Dorsolateral prefrontal cortex (tissue), 120 donors: ENCODE measurements at regions of chr7 and their contacts with region 1.

Region 1: DNA sequence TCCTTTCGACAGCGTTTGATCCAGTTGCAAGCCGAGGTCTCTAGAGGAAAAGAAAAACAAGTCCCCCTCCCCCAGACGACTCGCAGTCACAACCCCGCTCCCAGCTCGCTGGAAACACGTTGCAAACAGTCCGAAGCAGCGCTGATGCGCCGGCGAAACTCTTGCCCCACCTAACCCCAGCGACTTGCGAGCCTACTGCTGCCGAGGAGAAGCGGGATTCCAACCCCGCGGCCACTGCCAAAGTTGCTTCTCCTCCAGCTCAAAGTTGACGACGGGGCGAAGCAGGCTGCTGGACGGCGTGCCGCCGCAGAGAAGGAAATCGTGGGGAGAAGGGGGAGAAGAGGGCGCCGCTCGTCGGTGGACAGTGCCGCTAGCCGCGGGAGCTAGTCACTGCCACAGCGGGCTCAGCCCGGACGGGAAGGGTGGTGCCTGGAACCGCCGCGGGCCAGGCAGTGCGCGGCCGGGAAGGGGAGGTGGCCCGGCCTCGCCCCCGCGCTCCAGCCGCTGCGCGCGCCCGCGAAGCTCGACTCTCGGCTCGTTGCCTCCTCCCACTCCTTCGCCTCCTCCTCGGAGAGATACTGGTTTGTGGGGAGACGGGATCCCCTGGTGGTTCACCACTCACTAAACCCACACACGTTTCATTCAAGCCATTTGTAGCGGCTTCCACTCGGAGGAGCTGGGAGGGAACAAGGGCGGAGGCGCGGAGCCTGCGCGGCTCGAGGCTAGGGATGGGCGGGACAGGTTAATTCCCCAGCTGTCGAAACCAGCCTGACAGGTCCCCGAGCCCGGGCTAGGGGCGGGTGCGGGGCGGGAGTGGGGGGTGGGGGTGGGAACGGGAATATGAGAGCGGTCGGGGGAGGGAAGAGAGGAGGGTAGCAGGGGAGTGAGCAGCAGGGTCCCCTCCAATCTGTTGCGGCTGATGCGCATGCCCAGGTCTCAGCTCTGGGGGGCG is at the start of gene GPR37:
- DNase-seq: peak; percentile 34 to 91 (median 88)
- H3K4me3 ChIP-seq: peak within 1 kb of the TSS; percentile 51 to 92 (median 75)
- H3K27ac ChIP-seq: peak within 1 kb of the TSS; percentile 69 to 99 (median 95)
- H3K27me3 ChIP-seq: peaks cover 0 to 13% (median 0%) of the 10 kb centered on the region in 45 donors
- CTCF ChIP-seq: peak in 51 of 56 donors; percentile 10 to 72 (median 51)
- total RNA-seq, gene GPR37: 19.1 to 393 (median 88.3) TPM

Region 2: DNA sequence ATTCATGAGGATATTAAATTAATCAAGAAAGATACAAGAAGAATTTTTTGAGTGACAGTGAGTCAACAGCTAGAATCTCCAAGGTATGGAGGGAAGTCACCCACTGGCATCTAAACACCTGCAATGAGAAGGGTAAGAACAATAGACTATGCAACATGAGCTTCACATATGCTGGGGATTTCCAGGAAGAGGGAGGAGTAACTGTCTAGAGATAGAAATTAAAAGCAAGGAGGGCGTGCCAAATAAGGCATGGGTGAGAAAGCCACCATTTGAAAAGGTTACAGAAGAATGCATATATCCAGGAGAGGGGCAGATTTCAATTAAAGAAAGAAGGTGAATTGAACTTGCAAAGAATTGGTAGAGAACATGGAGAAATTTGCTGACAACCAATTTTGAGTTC is 365.7 kb before region 1 on chr7:
- intact Hi-C with region 1: loop called in 1 of 2 experiments (anchors 10 kb)
- DNase-seq: no peak
- H3K4me3 ChIP-seq: no peak overlapping the region
- H3K27ac ChIP-seq: no peak overlapping the region
- H3K27me3 ChIP-seq: no peaks in the 10 kb centered on the region
- CTCF ChIP-seq: no peak

Region 3: GRCh38 chr7:124550036-124550435 is 215.6 kb before region 1 on chr7:
- intact Hi-C with region 1: loop called in 1 of 2 experiments (anchors 5 kb)
- DNase-seq: no peak
- H3K4me3 ChIP-seq: peak overlapping the region in 9 of 59 donors; percentile 1 to 24 (median 16)
- H3K27ac ChIP-seq: peak overlapping the region in 5 of 59 donors; percentile 6 to 45 (median 7)
- H3K27me3 ChIP-seq: no peaks in the 10 kb centered on the region
- CTCF ChIP-seq: no peak

Region 4: DNA sequence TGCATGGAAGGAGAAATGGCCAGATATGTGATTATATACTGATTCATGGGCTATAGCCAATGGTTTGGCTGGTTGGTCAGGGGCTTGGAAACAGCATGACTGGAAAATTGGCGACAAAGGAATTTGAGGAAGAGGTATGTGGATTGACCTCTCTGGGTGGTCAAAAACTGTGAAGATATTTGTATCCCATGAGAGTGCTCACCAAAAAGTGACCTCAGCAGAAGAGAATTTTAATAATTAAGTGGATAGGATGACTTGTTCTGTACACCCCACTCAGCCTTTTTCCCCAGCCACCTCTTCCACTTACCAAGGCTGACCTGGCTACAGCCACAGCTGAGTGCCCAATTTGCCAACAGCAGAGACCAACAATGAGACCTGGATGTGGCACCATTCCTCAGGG is 146.8 kb before region 1 on chr7:
- intact Hi-C with region 1: no loop called
- DNase-seq: no peak
- H3K4me3 ChIP-seq: no peak overlapping the region
- H3K27ac ChIP-seq: no peak overlapping the region
- H3K27me3 ChIP-seq: no peaks in the 10 kb centered on the region
- CTCF ChIP-seq: no peak

Region 5: DNA sequence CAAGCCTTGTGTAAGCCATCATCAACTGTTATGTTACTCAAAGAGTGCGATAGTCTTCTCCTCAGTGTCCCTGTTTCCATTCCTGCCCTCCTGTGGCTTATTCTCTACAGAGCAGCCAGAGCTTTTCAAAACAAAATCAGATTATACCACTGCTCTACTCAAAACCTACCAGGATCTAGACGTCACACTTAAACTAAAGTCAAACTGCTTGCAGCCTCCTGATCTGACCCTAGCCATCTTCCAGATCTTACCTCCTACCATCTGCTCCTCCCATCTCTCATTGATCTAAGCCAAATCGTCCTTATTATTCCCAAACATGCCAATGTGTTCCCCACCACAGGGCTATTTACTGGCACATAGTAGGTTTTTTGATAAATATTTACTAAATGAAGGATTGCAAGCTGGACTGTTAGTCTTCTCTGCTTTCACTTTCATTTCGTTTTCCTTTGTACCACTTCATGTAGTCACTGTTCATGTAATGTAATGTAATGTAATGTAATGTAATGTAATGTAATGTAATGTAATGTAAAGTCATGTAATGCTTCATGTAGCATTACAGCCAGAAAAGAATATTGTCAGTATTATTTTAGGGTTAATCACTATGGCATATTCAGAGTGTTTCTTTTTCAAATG is 116.2 kb before region 1 on chr7:
- intact Hi-C with region 1: loop called (anchors 5 kb)
- DNase-seq: no peak
- H3K4me3 ChIP-seq: peak overlapping the region in 46 of 59 donors; percentile 1 to 55 (median 36)
- H3K27ac ChIP-seq: peak overlapping the region in 6 of 59 donors; percentile 19 to 53 (median 28)
- H3K27me3 ChIP-seq: no peaks in the 10 kb centered on the region
- CTCF ChIP-seq: no peak

Region 6: GRCh38 chr7:124723012-124723411 is 42.7 kb before region 1 on chr7:
- intact Hi-C with region 1: loop called in 1 of 2 experiments (anchors 1 kb)
- DNase-seq: no peak
- H3K4me3 ChIP-seq: no peak overlapping the region
- H3K27ac ChIP-seq: peak overlapping the region in 58 of 59 donors; percentile 56 to 98 (median 94)
- H3K27me3 ChIP-seq: no peaks in the 10 kb centered on the region
- CTCF ChIP-seq: no peak

Region 7: DNA sequence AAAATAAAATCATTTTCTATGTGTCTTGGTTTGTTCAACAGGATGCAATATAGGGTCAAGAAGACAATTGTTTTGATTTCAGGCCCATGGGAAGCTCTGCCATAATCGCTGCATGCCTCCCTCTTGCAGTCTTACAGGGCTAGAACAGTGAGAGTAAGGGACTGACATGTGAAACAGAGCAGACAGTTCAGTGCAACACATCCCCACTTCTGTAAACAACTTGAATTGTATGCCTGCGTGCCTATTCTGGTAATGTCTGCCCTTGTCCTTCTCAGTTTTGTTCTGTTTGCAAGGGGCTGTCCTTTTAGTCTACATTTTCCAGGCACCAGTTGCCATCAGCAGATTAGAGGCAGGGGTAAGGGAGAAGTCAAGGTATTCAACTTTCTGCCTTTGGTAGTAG is 34.7 kb after region 1 on chr7:
- intact Hi-C with region 1: no loop called
- DNase-seq: no peak
- H3K4me3 ChIP-seq: no peak overlapping the region
- H3K27ac ChIP-seq: no peak overlapping the region
- H3K27me3 ChIP-seq: no peaks in the 10 kb centered on the region
- CTCF ChIP-seq: no peak